Activated naive CD4-positive, alpha-beta T cell treated with anti-CD3 and anti-CD28 coated beads for 36 hours (primary cell): ENCODE measurements at regions of chr11 and their contacts with region 1.

Region 1: GRCh38 chr11:120248551-120249278 is 8.8 kb downstream of the POU2F3 start:
- DNase-seq: peak; percentile 42
- H3K4me3 Mint-ChIP-seq: no peak overlapping the region
- H3K27ac Mint-ChIP-seq: peak overlapping the region; percentile 78
- H3K4me1 Mint-ChIP-seq: peaks cover 42% of the 10 kb centered on the region
- H3K27me3 Mint-ChIP-seq: peaks cover 64% of the 10 kb centered on the region

Region 2: GRCh38 chr11:120210626-120211521 is 37.8 kb before region 1 on chr11 and contains the start of gene OAF:
- CTCF ChIA-PET with region 1: interaction called, 3 read pairs
- intact Hi-C with region 1: loop called (anchors 1 kb)
- DNase-seq: peak; percentile 59
- H3K4me3 Mint-ChIP-seq: peak within 1 kb of the TSS; percentile 83
- H3K27ac Mint-ChIP-seq: peak within 1 kb of the TSS; percentile 44
- H3K4me1 Mint-ChIP-seq: peaks cover 5% of the 10 kb centered on the region
- H3K27me3 Mint-ChIP-seq: peaks cover 10% of the 10 kb centered on the region
- total RNA-seq, gene OAF: 1.5 to 1.6 TPM

Region 3: GRCh38 chr11:120303004-120303637 is 54.4 kb after region 1 on chr11:
- CTCF ChIA-PET with region 1: interaction called, 12 read pairs
- intact Hi-C with region 1: no loop called
- DNase-seq: peak; percentile 74
- H3K4me3 Mint-ChIP-seq: no peak overlapping the region
- H3K27ac Mint-ChIP-seq: no peak overlapping the region
- H3K4me1 Mint-ChIP-seq: no peaks in the 10 kb centered on the region
- H3K27me3 Mint-ChIP-seq: peaks cover 18% of the 10 kb centered on the region